Activated CD8-positive, alpha-beta T cell treated with anti-CD3 and anti-CD28 coated beads, Interleukin-2, amount 10 ng/mL, durations not matched to agents 7 days and 5 days (primary cell): ENCODE measurements at regions of chr1 and their contacts with region 1.

Region 1: DNA sequence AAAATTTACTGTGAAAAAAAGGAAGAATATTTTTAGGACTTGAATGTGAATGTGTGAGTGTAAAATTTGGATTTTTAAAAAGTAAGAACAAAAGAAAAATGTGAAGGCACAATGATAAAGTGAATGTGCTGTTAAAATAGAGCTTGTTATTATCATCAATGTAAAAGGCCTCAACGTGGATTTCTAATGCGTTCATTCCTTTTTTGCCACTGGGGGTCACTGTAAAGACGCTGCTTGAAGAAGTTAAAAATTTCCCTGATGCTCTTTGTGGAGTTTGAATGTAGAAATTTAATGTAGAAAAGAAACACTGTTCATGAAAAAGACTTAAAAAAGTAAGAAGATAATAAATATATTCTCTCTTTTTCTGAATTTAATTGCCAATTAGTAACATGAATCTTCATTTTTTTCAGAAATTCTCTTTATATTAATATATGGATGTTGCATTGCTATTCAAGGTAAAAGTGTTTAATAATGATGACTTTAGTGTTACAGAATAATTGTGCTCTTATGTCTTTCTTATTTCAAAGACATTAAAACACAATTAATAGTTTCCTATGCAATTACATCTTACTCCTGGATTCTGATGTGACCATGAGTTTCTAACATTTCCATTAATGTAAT is 161.5 kb downstream of the DNM3 start:
- DNase-seq: peak; percentile 49
- ATAC-seq: no peak
- H3K4me3 Mint-ChIP-seq: no peak overlapping the region
- H3K27ac Mint-ChIP-seq: no peak overlapping the region
- H3K4me1 Mint-ChIP-seq: peaks cover 1% of the 10 kb centered on the region
- H3K27me3 Mint-ChIP-seq: no peaks in the 10 kb centered on the region

Region 2: DNA sequence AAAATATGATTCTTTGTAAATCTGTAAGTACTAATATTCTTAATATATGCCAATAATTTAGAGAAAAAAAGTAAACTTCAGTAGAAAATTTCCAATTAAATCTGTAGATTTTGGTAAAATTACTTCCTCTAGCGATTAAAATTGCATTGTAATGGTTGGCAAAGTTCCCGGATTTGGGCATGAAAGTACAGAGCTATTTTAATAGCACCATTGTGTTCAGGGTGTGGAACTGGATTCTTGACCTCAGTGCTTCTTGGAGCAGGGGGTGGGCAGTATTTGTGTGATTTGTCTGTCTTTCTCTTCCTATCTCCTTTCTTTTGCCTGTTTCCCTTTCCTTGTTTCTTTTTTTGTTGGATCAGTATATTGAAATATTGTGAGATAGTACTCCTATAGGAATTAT is 89.5 kb before region 1 on chr1:
- CTCF ChIA-PET with region 1: no interaction called
- POLR2A ChIA-PET with region 1: no interaction called
- DNase-seq: no peak
- ATAC-seq: no peak
- H3K4me3 Mint-ChIP-seq: no peak overlapping the region
- H3K27ac Mint-ChIP-seq: no peak overlapping the region
- H3K4me1 Mint-ChIP-seq: no peaks in the 10 kb centered on the region
- H3K27me3 Mint-ChIP-seq: no peaks in the 10 kb centered on the region

Region 3: DNA sequence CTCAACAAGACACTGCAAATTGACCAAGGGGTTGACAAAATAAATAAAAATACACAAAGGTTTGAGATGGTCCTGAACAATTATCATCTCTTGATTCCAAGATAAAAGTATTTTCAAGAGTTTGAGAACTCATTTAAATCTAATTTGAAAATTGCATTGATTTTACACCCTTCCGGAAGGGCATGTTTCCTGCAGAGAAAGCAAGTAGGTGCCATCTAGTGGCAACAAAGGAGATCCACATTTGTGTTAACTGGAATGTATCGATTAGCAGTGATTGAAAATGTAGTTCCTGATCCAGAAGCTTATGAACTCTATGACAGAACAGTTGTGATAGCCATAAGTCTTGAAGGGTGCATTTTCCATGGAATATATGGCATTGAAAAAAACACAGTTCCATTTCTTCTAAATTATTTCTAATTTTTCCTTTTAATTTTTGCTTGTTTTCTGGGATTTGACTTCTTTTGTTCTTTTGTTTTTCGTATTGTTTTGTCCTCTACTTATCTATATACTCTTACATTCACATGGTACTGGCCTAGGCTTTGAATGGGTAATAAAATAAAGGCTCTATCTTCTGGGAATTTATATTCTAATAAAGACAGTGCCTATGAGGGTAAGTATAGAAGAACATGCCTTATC is 17.9 kb before region 1 on chr1:
- CTCF ChIA-PET with region 1: interaction called, 35 read pairs
- POLR2A ChIA-PET with region 1: no interaction called
- DNase-seq: peak; percentile 25
- ATAC-seq: peak; percentile 57
- H3K4me3 Mint-ChIP-seq: no peak overlapping the region
- H3K27ac Mint-ChIP-seq: no peak overlapping the region
- H3K4me1 Mint-ChIP-seq: no peaks in the 10 kb centered on the region
- H3K27me3 Mint-ChIP-seq: peaks cover 9% of the 10 kb centered on the region

Region 4: GRCh38 chr1:172443626-172444453 is 441.0 kb after region 1 on chr1 and contains the start of gene PIGC:
- CTCF ChIA-PET with region 1: interaction called, 20 read pairs
- POLR2A ChIA-PET with region 1: no interaction called
- DNase-seq: peak; percentile 95
- ATAC-seq: peak; percentile 100
- H3K4me3 Mint-ChIP-seq: peak within 1 kb of the TSS; percentile 91
- H3K27ac Mint-ChIP-seq: peak within 1 kb of the TSS; percentile 91
- H3K4me1 Mint-ChIP-seq: peaks cover 32% of the 10 kb centered on the region
- H3K27me3 Mint-ChIP-seq: no peaks in the 10 kb centered on the region
- total RNA-seq, gene PIGC: 25.4 to 27.0 TPM